ENCODE measurements at regions of chr3 and their contacts with region 1.

Region 1: GRCh38 chr3:107429320-107430181 is 52.3 kb downstream of the CCDC54 start:
- DNase-seq: peak; percentile 82
- ATAC-seq: peak; percentile 67
- H3K4me3 Mint-ChIP-seq: peak overlapping the region; percentile 87
- H3K27ac Mint-ChIP-seq: no peak overlapping the region
- H3K4me1 Mint-ChIP-seq: peaks cover 15% of the 10 kb centered on the region
- H3K27me3 Mint-ChIP-seq: peaks cover 29% of the 10 kb centered on the region
- CTCF ChIP-seq: peak; percentile 91

Region 2: GRCh38 chr3:107235928-107236315 is 193.6 kb before region 1 on chr3:
- CTCF ChIA-PET with region 1: interaction called, 50 read pairs
- POLR2A ChIA-PET with region 1: interaction called, 3 read pairs
- DNase-seq: no peak
- ATAC-seq: peak; percentile 59
- H3K4me3 Mint-ChIP-seq: peak overlapping the region; percentile 1
- H3K27ac Mint-ChIP-seq: no peak overlapping the region
- H3K4me1 Mint-ChIP-seq: peaks cover 26% of the 10 kb centered on the region
- H3K27me3 Mint-ChIP-seq: peaks cover 11% of the 10 kb centered on the region
- CTCF ChIP-seq: peak; percentile 66

Region 3: DNA sequence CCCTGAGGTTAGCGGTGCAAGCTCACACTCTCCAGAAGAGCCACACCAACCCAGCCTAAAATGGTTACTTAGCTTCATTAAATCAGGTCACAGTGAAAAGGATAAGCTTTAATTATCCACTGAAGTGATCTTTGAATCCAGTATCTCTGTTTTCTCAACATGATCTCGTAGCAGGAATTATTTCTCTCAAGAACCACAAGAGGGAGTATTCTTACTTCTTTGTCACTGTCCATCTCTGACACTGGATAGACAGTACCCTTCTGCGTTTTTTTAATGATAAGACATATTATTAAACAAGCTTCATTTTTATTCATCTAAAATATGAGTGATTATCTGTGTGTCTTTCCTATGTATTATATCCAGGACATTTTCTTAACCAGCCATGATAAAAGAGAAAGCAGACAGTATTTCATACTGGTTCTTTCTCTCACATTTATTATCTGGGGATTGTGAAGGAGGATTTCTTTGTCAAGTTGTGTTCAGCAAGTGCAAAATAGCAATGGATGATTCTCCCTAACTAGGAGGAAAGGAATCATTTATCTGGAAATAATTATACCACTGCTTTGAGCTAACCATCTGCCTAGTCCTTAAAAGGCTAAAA is 157.7 kb before region 1 on chr3:
- CTCF ChIA-PET with region 1: interaction called, 64 read pairs
- POLR2A ChIA-PET with region 1: no interaction called
- DNase-seq: no peak
- ATAC-seq: peak; percentile 67
- H3K4me3 Mint-ChIP-seq: no peak overlapping the region
- H3K27ac Mint-ChIP-seq: no peak overlapping the region
- H3K4me1 Mint-ChIP-seq: peaks cover 9% of the 10 kb centered on the region
- H3K27me3 Mint-ChIP-seq: no peaks in the 10 kb centered on the region; the same call in 1 of the 2 replicates
- CTCF ChIP-seq: peak; percentile 57

Region 4: DNA sequence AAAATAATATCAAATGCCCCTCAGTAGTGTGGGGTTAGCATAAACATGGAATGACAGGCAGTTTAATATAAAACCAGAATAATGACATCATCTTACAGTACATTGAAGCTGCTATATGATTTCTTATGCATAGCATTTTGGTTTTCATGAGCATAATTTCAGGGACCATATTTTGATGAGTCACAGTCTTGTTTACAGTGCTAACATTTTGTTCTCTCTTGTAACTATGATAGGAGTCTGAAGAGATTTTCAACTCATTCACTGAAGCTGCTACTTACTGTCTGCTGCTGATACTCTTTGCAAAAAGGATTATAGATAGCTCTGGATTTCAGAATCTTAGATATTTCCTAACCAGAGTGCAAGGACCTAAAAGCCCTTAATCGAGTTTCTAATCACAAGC is 144.9 kb before region 1 on chr3:
- CTCF ChIA-PET with region 1: interaction called, 26 read pairs
- POLR2A ChIA-PET with region 1: no interaction called
- DNase-seq: no peak
- ATAC-seq: peak; percentile 4; the same call in 1 of the 2 replicates
- H3K4me3 Mint-ChIP-seq: no peak overlapping the region
- H3K27ac Mint-ChIP-seq: peak overlapping the region; percentile 98
- H3K4me1 Mint-ChIP-seq: peaks cover 37% of the 10 kb centered on the region
- H3K27me3 Mint-ChIP-seq: no peaks in the 10 kb centered on the region; the same call in 1 of the 2 replicates
- CTCF ChIP-seq: no peak

Region 5: DNA sequence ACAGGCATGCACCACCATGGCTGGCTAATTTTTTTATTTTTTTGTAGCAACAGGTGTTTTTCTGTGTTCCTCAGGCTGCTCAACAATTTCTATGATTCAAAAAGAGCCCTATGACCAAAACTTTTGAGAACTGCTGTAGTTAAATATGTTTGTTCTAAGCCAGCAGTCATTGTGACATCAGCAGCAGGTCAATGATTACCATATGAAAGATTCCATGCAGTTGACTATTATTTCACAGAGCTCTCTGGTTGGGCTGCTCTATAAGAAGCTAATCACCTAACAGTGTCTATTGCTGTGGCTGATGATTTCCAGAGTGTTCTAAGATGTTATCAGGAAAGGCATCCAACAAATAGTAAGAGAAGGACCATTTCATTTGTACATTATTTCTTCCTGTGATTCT is 52.4 kb before region 1 on chr3 and contains the start of gene CCDC54:
- CTCF ChIA-PET with region 1: no interaction called
- POLR2A ChIA-PET with region 1: no interaction called
- DNase-seq: no peak
- ATAC-seq: no peak
- H3K4me3 Mint-ChIP-seq: no peak within 1 kb of the TSS
- H3K27ac Mint-ChIP-seq: no peak within 1 kb of the TSS
- H3K4me1 Mint-ChIP-seq: peaks cover 40% of the 10 kb centered on the region
- H3K27me3 Mint-ChIP-seq: no peaks in the 10 kb centered on the region
- CTCF ChIP-seq: no peak
- total RNA-seq, gene CCDC54: not detected in 3 replicates

Region 6: DNA sequence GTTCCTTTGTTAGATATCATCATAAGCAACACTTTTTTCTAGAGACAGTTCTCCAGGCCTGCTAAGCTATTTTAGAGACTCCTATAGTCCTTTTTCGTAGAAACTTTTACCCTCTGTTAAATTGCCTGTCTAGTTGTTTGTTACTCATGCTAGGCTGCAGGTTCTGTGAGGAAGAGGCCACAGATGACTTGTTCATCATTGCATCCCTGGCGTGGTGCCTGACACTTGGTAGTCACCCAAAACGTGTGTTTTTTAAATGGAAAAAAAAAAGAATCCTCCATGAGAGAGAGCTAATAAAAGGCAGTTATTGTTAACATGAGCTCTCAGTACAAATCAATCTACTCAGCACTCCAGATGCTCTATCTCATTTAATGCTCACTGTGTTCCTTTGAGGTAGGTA is 17.2 kb before region 1 on chr3:
- CTCF ChIA-PET with region 1: interaction called, 12 read pairs
- POLR2A ChIA-PET with region 1: no interaction called
- DNase-seq: no peak
- ATAC-seq: no peak
- H3K4me3 Mint-ChIP-seq: no peak overlapping the region
- H3K27ac Mint-ChIP-seq: no peak overlapping the region
- H3K4me1 Mint-ChIP-seq: no peaks in the 10 kb centered on the region
- H3K27me3 Mint-ChIP-seq: no peaks in the 10 kb centered on the region
- CTCF ChIP-seq: no peak

Region 7: GRCh38 chr3:107512108-107512507 is 82.6 kb after region 1 on chr3:
- CTCF ChIA-PET with region 1: interaction called, 48 read pairs
- POLR2A ChIA-PET with region 1: no interaction called
- DNase-seq: no peak
- ATAC-seq: peak; percentile 78
- H3K4me3 Mint-ChIP-seq: no peak overlapping the region
- H3K27ac Mint-ChIP-seq: no peak overlapping the region
- H3K4me1 Mint-ChIP-seq: no peaks in the 10 kb centered on the region
- H3K27me3 Mint-ChIP-seq: no peaks in the 10 kb centered on the region
- CTCF ChIP-seq: no peak

Region 8: DNA sequence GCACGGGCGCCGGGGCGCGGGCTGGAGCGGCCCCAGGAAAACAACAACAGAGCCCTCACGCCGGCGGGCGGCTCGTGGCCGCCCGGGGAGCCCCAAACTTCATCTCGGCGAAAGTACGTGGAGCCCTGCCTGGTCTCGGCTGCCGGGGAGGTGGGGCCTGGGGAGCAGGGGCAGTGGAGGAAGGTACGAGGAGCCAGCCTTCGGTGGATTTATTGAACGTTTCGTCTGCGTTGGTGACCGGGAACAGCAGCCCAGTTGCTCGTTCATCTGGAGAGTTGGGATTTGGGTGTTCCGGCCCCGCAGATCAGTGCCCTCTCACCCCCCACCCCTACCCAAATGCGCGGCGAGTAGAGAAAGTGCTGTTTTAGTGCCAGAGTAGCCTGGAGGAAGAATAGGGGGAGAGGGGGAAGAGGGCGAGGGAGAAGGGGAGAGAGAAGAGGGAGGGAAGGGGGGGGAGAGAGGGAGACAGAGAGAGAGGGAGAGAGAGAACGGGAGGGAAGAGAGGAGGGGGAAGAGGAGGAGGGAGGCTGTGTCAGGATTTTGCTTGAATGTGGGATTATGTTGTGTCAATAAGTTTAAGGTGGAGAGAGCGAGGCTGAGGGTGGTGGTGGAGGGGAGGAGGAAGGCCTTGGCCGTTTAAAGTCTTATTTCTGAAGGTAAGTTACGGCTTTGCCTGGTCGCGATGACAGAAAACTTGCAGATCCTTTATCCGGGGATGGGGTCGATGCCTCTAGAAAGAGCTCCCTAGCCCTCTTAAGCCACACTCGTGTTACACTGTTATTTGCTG is 94.2 kb after region 1 on chr3:
- CTCF ChIA-PET with region 1: interaction called, 10 read pairs
- POLR2A ChIA-PET with region 1: interaction called, 5 read pairs
- DNase-seq: peak; percentile 44
- ATAC-seq: peak; percentile 14
- H3K4me3 Mint-ChIP-seq: peak overlapping the region; percentile 94
- H3K27ac Mint-ChIP-seq: peak overlapping the region; percentile 80
- H3K4me1 Mint-ChIP-seq: peaks cover 19% of the 10 kb centered on the region
- H3K27me3 Mint-ChIP-seq: peaks cover 10% of the 10 kb centered on the region
- CTCF ChIP-seq: no peak